ENCODE measurements at regions of chr9 and their contacts with region 1.

Region 1: DNA sequence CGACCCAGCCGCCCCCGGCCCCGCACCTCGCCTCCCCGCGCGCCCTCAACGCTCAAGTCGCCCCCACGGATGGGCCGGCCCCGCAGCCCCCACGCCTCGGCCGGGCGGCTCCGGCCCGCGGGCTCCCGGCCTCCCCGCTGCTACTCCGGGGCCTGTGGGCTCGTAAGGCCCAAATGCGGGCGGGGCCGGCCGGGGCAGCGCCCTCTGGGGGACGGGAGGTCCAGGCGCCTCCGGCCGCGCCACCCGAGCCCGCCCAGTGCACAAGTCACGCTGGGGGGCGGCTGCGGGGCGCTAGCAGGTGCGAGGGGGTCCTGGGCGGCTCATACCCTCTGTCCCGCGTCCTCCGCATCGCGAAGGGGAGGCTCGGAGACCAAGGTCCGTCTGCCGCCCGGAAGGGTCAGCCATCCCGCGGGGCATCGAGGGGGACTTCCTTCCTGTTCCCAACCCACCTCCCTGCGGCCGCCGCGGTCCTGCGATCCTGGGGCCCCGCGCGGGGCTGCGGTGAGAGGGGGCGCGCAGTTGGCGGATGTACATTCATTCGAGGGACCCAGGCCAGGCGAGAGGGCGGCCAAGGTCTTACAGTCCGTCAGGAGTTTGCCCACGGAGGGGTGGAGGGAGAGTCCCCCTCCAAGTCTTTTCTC is at the start of gene CIZ1:
- DNase-seq: peak; percentile 76
- H3K4me3 Mint-ChIP-seq: peak within 1 kb of the TSS; percentile 99
- H3K27ac Mint-ChIP-seq: peak within 1 kb of the TSS; percentile 86
- H3K4me1 Mint-ChIP-seq: peaks cover 33% of the 10 kb centered on the region
- H3K27me3 Mint-ChIP-seq: no peaks in the 10 kb centered on the region
- total RNA-seq, gene CIZ1: 95.4 to 105 TPM

Region 2: DNA sequence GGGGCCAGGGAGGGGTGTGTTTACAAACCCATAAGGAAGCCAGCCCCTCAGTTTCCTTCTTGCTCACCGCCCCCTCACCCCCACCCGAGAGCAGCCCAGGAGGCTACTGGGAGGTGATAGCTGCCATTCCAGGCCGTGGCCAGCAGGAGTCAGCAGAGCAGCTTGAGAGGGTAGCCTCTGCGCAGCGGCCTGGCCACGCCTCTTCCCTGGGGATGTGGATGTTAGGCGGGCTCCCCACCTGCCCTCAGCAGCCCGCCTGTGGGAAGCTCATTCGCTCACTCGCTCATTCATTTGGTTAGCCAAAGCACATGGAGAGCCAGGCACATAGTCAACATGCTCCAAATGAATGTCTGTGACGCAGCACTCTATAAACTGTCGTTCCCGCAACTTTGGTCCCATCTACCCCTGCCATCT is 247.8 kb before region 1 on chr9:
- CTCF ChIA-PET with region 1: no interaction called
- POLR2A ChIA-PET with region 1: no interaction called
- intact Hi-C with region 1: no loop called
- DNase-seq: peak; percentile 87
- H3K4me3 Mint-ChIP-seq: no peak overlapping the region
- H3K27ac Mint-ChIP-seq: peak overlapping the region; percentile 61
- H3K4me1 Mint-ChIP-seq: peaks cover 18% of the 10 kb centered on the region
- H3K27me3 Mint-ChIP-seq: no peaks in the 10 kb centered on the region

Region 3: GRCh38 chr9:128218518-128219389 is 27.2 kb after region 1 on chr9:
- CTCF ChIA-PET with region 1: interaction called, 7 read pairs
- POLR2A ChIA-PET with region 1: no interaction called
- intact Hi-C with region 1: loop called (anchors 2 kb)
- DNase-seq: peak; percentile 99
- H3K4me3 Mint-ChIP-seq: peak overlapping the region; percentile 70
- H3K27ac Mint-ChIP-seq: no peak overlapping the region
- H3K4me1 Mint-ChIP-seq: peaks cover 11% of the 10 kb centered on the region
- H3K27me3 Mint-ChIP-seq: peaks cover 3% of the 10 kb centered on the region

Measured in activated CD4-positive, alpha-beta memory T cell treated with anti-CD3 and anti-CD28 coated beads for 36 hours (primary cell).